Adrenal gland (tissue), 19 donors: ENCODE measurements at regions of chr2 and their contacts with region 1.

Region 1: GRCh38 chr2:195318440-195319111 is 338.4 kb upstream of the SLC39A10 start:
- DNase-seq: peak in 6 of 7 donors; percentile 29 to 62 (median 48)
- H3K4me3 ChIP-seq: no peak overlapping the region
- H3K27ac ChIP-seq: no peak overlapping the region
- H3K4me1 ChIP-seq: peaks cover 0 to 6% of the 10 kb centered on the region in 2 donors
- H3K27me3 ChIP-seq: no peaks in the 10 kb centered on the region
- CTCF ChIP-seq: peak; percentile 38 to 82 (median 70)
- POLR2A ChIP-seq: no peak

Region 2: DNA sequence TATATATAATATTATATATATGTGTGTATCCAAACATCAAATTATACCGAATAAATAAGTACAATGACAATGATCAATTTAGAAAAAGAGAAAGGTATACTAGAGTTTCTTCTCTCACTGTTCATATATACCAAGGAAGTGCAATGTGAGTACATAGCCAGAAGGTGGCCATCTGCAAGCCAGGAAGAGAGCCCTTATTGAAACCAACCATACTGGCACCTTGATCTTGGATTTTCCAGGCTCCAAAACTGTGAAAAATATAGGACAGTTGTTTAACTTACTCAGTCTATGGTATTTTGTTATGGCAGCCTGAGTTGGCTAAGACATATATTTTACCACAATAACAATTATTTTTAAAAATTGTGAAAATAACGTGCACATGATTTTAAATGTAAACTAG is 1151.8 kb before region 1 on chr2:
- intact Hi-C with region 1: loop called in 1 of 2 experiments (anchors 5 kb)
- DNase-seq: peak in 1 of 7 donors; percentile 10
- H3K4me3 ChIP-seq: no peak overlapping the region
- H3K27ac ChIP-seq: no peak overlapping the region
- H3K4me1 ChIP-seq: no peaks in the 10 kb centered on the region
- H3K27me3 ChIP-seq: no peaks in the 10 kb centered on the region
- CTCF ChIP-seq: peak; percentile 31 to 52 (median 36)
- POLR2A ChIP-seq: no peak

Region 3: GRCh38 chr2:194545978-194546377 is 772.6 kb before region 1 on chr2:
- intact Hi-C with region 1: loop called (anchors 5 to 10 kb)
- DNase-seq: no peak
- H3K4me3 ChIP-seq: no peak overlapping the region
- H3K27ac ChIP-seq: no peak overlapping the region
- H3K4me1 ChIP-seq: no peaks in the 10 kb centered on the region
- H3K27me3 ChIP-seq: no peaks in the 10 kb centered on the region
- CTCF ChIP-seq: peak in 5 of 6 experiments; percentile 9 to 53 (median 45)
- POLR2A ChIP-seq: no peak

Region 4: GRCh38 chr2:194559964-194560363 is 758.6 kb before region 1 on chr2:
- intact Hi-C with region 1: loop called in 1 of 2 experiments (anchors 10 kb)
- DNase-seq: no peak
- H3K4me3 ChIP-seq: no peak overlapping the region
- H3K27ac ChIP-seq: no peak overlapping the region
- H3K4me1 ChIP-seq: no peaks in the 10 kb centered on the region
- H3K27me3 ChIP-seq: no peaks in the 10 kb centered on the region
- CTCF ChIP-seq: no peak
- POLR2A ChIP-seq: no peak

Region 5: DNA sequence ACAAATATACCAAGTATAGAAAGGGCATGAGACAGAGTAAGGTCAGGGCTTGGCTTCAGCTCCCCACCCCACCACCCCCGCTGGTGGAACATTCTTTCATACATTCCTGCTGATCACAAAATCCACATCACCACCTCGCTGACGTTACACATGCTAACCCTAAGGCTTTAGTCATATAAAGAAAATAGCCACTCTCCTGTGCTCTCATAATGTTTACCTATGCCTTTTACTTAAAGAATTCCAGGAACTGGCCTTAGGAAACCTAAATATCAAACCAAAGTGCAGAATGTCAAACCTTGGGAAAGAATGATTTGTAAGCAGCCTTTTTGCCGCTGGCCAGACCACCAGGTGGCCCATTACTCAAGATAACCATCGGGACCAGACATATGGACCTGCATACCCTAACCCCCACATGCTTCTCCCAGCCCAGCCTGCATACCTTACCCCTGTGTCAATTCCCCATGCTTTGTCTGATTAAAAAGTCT is 202.1 kb after region 1 on chr2:
- intact Hi-C with region 1: no loop called
- DNase-seq: no peak
- H3K4me3 ChIP-seq: no peak overlapping the region
- H3K27ac ChIP-seq: no peak overlapping the region
- H3K4me1 ChIP-seq: no peaks in the 10 kb centered on the region
- H3K27me3 ChIP-seq: no peaks in the 10 kb centered on the region
- CTCF ChIP-seq: no peak
- POLR2A ChIP-seq: no peak

Region 6: DNA sequence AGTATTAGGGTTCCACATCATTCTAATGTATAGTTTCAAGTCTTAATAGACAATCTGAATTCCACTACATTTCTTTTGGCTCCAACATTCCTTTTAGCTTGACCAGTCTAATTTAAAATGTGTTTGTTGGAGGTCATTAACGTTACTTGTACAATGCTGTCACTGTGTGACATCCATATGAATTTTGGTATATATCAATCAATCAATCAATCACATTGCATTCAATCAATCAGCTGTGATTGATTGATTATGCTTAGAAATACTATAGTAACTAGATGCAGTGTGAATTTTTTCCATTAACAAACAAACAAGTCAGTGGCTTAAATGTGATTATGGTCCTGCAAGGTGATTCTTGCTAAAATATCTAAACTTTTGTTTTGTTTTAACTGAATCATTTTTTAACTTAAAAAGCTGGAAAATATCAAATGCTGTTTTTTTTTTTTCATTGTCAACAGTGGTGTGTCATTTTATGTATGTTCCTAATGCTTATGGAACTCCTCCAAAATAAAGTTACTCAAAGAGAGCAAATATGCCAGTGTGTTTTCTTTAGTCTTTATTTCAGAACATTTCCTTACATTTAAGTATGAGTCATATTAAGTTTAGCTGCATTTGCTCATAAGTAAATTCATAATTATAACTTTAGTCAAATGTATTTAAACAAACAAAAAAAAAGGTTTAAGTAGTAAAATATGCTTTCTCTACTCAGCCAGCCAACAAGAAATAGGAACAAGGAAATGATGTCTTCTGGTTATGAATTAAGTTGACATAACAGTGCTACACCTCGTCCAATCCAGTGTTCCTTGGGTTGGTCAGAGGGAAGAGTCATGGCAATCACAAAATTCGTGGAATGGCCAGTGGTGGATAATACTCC is 418.8 kb after region 1 on chr2:
- intact Hi-C with region 1: no loop called
- DNase-seq: no peak
- H3K4me3 ChIP-seq: no peak overlapping the region
- H3K27ac ChIP-seq: no peak overlapping the region
- H3K4me1 ChIP-seq: no peaks in the 10 kb centered on the region
- H3K27me3 ChIP-seq: no peaks in the 10 kb centered on the region
- CTCF ChIP-seq: no peak
- POLR2A ChIP-seq: no peak

Region 7: DNA sequence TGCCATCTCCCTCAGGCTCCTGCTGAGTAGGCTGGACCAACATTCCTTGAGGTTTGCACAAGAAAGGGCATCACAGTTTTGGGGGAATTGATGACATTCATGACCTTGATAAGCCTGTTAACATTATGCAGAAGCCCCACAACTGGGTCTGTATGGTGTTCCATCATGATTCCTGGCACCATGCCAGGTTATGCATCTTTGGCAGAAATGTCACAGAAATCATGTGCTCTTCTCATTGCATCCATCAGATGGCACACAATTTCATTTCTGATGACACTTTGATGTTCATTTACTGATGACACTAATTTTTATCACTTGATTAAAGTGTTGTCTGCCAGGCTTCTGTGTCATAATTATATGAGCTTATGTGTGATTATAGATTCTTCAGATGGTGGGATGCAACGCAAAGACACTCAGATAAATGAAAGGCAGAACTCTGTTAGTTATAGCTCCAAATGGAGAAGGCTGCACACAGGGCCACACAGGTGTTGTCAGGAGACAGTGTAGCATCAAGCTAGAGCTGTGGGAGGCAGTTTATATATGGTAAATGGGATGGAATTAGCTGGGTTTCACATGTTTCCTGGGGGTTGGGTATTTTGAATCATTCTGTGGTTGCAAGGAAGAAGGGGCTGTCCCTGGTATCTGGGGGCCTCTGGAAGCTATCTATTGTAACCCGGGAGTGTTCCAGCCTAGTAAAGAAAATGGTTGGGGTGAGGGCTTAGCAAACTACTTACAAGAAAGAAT is 529.8 kb after region 1 on chr2:
- intact Hi-C with region 1: no loop called
- DNase-seq: no peak
- H3K4me3 ChIP-seq: no peak overlapping the region
- H3K27ac ChIP-seq: no peak overlapping the region
- H3K4me1 ChIP-seq: no peaks in the 10 kb centered on the region
- H3K27me3 ChIP-seq: no peaks in the 10 kb centered on the region
- CTCF ChIP-seq: no peak
- POLR2A ChIP-seq: no peak